Motor neuron (in vitro differentiated cells): ENCODE measurements at regions of chr11 and their contacts with region 1.

Region 1: DNA sequence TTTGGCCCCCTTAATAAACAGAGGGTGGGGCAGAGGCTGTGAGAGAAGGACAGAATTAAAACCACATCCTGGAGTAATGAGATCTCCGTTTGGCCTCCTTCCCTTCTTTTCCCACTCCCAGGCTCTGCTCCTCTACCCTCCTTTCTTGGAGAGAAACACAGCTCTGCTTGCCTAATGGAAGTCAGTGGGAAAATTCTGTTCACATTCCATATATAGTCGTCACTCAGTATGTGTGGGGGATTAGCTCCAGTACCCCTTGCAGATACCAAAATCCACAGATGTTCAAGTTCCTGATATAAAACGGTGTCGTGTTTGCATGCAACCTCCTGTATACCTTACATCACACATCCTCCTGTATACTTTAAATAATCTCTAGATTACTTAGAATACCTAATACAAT is 37.6 kb upstream of the THY1 start:
- ATAC-seq: peak in 3 of 8 experiments; percentile 53 to 79 (median 66)
- H3K4me3 ChIP-seq: no peak overlapping the region
- H3K27ac ChIP-seq: no peak overlapping the region
- H3K4me1 ChIP-seq: no peaks in the 10 kb centered on the region

Region 2: GRCh38 chr11:119356349-119357031 is 104.1 kb before region 1 on chr11:
- in situ Hi-C with region 1: loop called in 1 of 9 experiments (anchors 10 kb)
- ATAC-seq: peak; percentile 55 to 81 (median 71)
- H3K4me3 ChIP-seq: peak overlapping the region; percentile 15 to 26 (median 25)
- H3K27ac ChIP-seq: no peak overlapping the region
- H3K4me1 ChIP-seq: peaks cover 21 to 47% of the 10 kb centered on the region in 2 donors